ENCODE measurements at regions of chr10 and their contacts with region 1.

Region 1: DNA sequence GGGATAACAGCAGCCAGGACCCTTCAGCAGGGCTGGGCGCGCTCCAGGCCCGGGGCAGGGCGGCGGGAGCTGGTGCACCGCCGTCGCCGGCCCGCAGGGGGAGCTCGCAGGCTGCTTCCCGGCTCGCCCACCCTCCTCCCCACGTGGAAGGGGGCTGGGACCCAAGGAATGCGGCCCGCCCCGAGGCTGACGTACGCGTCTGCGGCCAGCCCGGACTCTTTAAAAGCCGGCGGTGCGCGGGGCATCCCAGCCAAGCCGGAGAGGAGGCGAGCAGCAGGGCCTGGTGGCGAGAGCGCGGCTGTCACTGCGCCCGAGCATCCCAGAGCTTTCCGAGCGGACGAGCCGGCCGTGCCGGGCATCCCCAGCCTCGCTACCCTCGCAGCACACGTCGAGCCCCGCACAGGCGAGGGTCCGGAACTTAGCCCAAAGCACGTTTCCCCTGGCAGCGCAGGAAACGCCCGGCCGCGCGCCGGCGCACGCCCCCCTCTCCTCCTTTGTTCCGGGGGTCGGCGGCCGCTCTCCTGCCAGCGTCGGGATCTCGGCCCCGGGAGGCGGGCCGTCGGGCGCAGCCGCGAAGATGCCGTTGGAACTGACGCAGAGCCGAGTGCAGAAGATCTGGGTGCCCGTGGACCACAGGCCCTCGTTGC is at the start of gene PFKFB3:
- DNase-seq: peak; percentile 91 to 99 (median 98)

Region 2: GRCh38 chr10:6163364-6164270 is 39.2 kb before region 1 on chr10:
- intact Hi-C with region 1: loop called (anchors 5 kb)
- DNase-seq: peak; percentile 53 to 95 (median 90)

Region 3: GRCh38 chr10:6247041-6247712 is 44.4 kb after region 1 on chr10:
- intact Hi-C with region 1: no loop called
- DNase-seq: peak in 23 of 42 donors; percentile 17 to 78 (median 55)

Region 4: GRCh38 chr10:6401562-6402348 is 198.9 kb after region 1 on chr10:
- intact Hi-C with region 1: loop called (anchors 2 kb)
- DNase-seq: peak; percentile 59 to 94 (median 83)